Activated CD4-positive, alpha-beta T cell treated with anti-CD3 and anti-CD28 coated beads for 36 hours (primary cell): ENCODE measurements at regions of chr16 and their contacts with region 1.

Region 1: GRCh38 chr16:53130159-53131049 is 75.6 kb downstream of the CHD9 start:
- DNase-seq: peak; percentile 93
- ATAC-seq: peak; percentile 83
- H3K4me3 Mint-ChIP-seq: peak overlapping the region; percentile 70
- H3K27ac Mint-ChIP-seq: peak overlapping the region; percentile 55
- H3K4me1 Mint-ChIP-seq: peaks cover 20% of the 10 kb centered on the region
- H3K27me3 Mint-ChIP-seq: peaks cover 3% of the 10 kb centered on the region

Region 2: GRCh38 chr16:52976539-52977167 is 153.8 kb before region 1 on chr16:
- CTCF ChIA-PET with region 1: no interaction called
- POLR2A ChIA-PET with region 1: no interaction called
- intact Hi-C with region 1: no loop called
- DNase-seq: no peak
- ATAC-seq: no peak
- H3K4me3 Mint-ChIP-seq: no peak overlapping the region
- H3K27ac Mint-ChIP-seq: no peak overlapping the region
- H3K4me1 Mint-ChIP-seq: no peaks in the 10 kb centered on the region
- H3K27me3 Mint-ChIP-seq: peaks cover 36% of the 10 kb centered on the region

Region 3: DNA sequence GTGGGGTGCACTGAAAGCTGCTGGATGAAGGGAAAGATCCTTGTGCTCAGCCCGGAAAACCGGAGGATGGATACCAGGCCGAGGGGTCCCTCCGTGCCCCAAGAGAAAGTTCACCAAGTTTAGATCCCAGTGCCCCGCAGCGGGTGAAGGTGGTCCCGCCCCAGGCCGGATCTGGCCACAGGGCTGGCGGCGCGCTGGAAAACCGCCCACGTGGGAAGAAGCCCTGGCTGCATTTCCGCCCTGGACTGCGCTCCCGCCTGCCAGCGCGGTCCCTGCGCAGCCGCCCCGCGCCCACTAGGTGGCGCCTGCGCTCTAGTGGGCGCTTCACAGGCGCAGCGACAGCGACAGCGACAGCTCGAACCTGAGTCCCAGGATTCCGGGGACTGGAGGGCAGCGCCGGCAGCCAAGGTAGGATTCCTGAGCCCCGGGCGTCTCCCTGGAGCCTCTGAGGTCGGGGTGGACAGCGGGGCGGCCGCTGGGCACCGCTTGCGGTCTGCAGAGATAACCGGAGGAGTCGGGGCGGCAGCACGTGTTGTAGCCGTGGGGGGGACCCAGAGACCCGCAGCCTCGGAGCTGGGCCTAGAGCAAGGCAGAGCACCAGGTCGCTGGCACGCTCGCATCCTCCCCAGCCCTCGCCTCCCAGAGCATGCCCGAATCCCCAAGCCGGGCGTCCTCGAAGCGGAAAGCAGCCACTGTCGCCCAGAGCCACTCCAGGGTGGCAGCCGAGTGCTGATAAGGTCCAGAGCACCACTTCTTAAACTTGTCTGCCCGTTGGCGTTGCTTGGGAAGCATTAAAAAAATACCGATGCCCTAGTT is 75.5 kb before region 1 on chr16 and contains the start of gene CHD9:
- CTCF ChIA-PET with region 1: interaction called, 6 read pairs
- POLR2A ChIA-PET with region 1: no interaction called
- intact Hi-C with region 1: loop called (anchors 1 kb)
- DNase-seq: peak; percentile 82
- ATAC-seq: peak; percentile 89
- H3K4me3 Mint-ChIP-seq: peak within 1 kb of the TSS; percentile 70
- H3K27ac Mint-ChIP-seq: peak within 1 kb of the TSS; percentile 83
- H3K4me1 Mint-ChIP-seq: peaks cover 21% of the 10 kb centered on the region
- H3K27me3 Mint-ChIP-seq: peaks cover 6% of the 10 kb centered on the region
- total RNA-seq, gene CHD9: 13.2 to 18.8 TPM

Region 4: GRCh38 chr16:53159781-53160436 is 29.5 kb after region 1 on chr16:
- CTCF ChIA-PET with region 1: interaction called, 4 read pairs
- POLR2A ChIA-PET with region 1: no interaction called
- intact Hi-C with region 1: loop called in 1 of 2 experiments (anchors 1 kb)
- DNase-seq: no peak
- ATAC-seq: peak; percentile 64
- H3K4me3 Mint-ChIP-seq: no peak overlapping the region
- H3K27ac Mint-ChIP-seq: no peak overlapping the region
- H3K4me1 Mint-ChIP-seq: peaks cover under 1% of the 10 kb centered on the region
- H3K27me3 Mint-ChIP-seq: no peaks in the 10 kb centered on the region

Region 5: GRCh38 chr16:53249331-53249730 is 118.9 kb after region 1 on chr16:
- CTCF ChIA-PET with region 1: no interaction called
- POLR2A ChIA-PET with region 1: no interaction called
- intact Hi-C with region 1: no loop called
- DNase-seq: no peak
- ATAC-seq: no peak
- H3K4me3 Mint-ChIP-seq: no peak overlapping the region
- H3K27ac Mint-ChIP-seq: no peak overlapping the region
- H3K4me1 Mint-ChIP-seq: no peaks in the 10 kb centered on the region
- H3K27me3 Mint-ChIP-seq: no peaks in the 10 kb centered on the region

Region 6: DNA sequence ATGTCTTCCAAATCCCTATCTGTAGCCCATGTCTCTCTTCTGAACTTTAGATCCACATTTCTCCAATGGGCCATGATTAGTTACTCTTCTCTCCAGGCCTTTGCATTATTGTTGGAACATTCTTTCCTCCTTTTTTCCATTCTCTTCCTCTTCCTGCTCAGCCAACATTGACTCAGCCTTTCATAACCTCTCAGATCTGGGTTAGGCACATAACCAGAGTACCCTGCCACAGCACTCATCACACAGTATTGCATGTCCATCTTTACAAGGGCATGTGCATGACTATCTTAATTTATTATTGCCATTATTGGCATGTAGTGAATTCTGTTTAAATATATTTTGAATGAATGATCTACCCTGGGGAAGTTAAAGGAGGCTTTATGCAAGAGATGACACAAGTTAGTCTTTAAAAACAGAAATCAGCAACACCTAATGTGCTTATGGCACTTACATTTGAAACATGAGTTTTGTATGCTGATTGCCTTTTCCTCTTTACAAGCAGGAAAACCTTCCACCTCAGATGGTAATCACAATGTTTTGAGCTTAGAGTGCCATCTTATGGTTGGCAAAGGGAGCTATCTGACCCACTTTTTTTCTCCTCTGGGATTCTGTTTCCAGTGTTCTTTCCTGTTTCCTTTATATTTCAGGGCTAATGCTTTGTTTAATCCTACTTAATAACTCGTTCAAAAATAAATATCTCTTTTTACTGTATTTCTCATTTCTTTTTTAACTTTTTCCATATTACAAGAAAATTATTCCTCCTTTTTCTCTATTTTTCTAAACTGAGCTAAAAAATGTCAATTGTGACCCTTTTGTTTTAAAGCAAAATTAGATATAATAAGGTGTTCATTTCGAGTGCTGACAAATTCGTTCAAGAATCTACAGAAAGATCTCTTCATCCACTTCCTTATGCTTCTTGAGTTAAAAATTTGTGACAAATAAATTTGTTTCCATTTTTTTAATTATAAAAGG is 152.9 kb after region 1 on chr16:
- CTCF ChIA-PET with region 1: no interaction called
- POLR2A ChIA-PET with region 1: no interaction called
- intact Hi-C with region 1: loop called (anchors 1 to 10 kb)
- DNase-seq: no peak
- ATAC-seq: no peak
- H3K4me3 Mint-ChIP-seq: no peak overlapping the region
- H3K27ac Mint-ChIP-seq: no peak overlapping the region
- H3K4me1 Mint-ChIP-seq: no peaks in the 10 kb centered on the region
- H3K27me3 Mint-ChIP-seq: no peaks in the 10 kb centered on the region

Region 7: DNA sequence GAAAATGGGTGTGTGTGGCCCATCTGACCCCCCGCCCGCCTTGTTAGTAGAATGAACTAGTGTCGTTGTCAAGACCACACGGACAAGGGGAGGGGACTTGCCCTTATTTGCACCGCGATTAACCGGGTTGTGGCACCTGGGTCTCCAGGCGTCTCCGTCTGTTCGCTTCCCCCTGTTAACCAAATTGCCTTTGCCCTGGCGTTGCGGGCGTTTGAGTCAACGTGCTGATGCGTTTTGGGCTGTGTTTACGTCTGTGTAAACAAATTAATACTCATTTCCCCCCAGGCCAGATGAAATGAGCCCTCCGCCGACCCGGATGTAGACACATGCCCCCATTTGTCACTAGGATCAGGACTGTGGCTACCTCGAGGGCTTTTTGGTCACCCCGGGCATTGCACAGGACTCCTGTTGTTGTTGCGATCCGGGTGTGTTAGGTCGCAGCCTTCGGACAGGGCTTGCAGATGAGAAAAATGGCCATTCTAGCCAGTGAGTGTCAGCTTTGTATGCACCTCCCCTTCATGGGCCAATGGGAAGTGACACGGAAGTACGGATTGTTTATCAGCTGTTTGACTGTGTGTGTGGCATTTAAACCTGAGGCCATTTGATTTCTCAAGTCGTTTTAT is 304.8 kb after region 1 on chr16:
- CTCF ChIA-PET with region 1: no interaction called
- POLR2A ChIA-PET with region 1: no interaction called
- intact Hi-C with region 1: loop called (anchors 1 to 10 kb)
- DNase-seq: peak; percentile 69
- ATAC-seq: peak; percentile 67
- H3K4me3 Mint-ChIP-seq: peak overlapping the region; percentile 98
- H3K27ac Mint-ChIP-seq: peak overlapping the region; percentile 95
- H3K4me1 Mint-ChIP-seq: peaks cover 42% of the 10 kb centered on the region
- H3K27me3 Mint-ChIP-seq: no peaks in the 10 kb centered on the region

Region 8: GRCh38 chr16:53509906-53510703 is 379.7 kb after region 1 on chr16:
- CTCF ChIA-PET with region 1: no interaction called
- POLR2A ChIA-PET with region 1: no interaction called
- intact Hi-C with region 1: loop called in 1 of 2 experiments (anchors 2 kb)
- DNase-seq: peak; percentile 58
- ATAC-seq: peak; percentile 48
- H3K4me3 Mint-ChIP-seq: peak overlapping the region; percentile 26
- H3K27ac Mint-ChIP-seq: no peak overlapping the region
- H3K4me1 Mint-ChIP-seq: peaks cover 32% of the 10 kb centered on the region
- H3K27me3 Mint-ChIP-seq: no peaks in the 10 kb centered on the region

Region 9: GRCh38 chr16:53703590-53704444 is 573.4 kb after region 1 on chr16 and contains the starts of genes FTO and RPGRIP1L:
- CTCF ChIA-PET with region 1: no interaction called
- POLR2A ChIA-PET with region 1: no interaction called
- intact Hi-C with region 1: loop called (anchors 1 to 5 kb)
- DNase-seq: peak; percentile 99
- ATAC-seq: peak; percentile 98
- H3K4me3 Mint-ChIP-seq: peak within 1 kb of the TSS; percentile 96
- H3K27ac Mint-ChIP-seq: peak within 1 kb of the TSS; percentile 97
- H3K4me1 Mint-ChIP-seq: peaks cover 35% of the 10 kb centered on the region
- H3K27me3 Mint-ChIP-seq: no peaks in the 10 kb centered on the region
- total RNA-seq, gene FTO: 50.9 to 57.6 TPM
- total RNA-seq, gene RPGRIP1L: 7.8 to 10.2 TPM